Motor neuron (in vitro differentiated cells): ENCODE measurements at regions of chr5 and their contacts with region 1.

Region 1: DNA sequence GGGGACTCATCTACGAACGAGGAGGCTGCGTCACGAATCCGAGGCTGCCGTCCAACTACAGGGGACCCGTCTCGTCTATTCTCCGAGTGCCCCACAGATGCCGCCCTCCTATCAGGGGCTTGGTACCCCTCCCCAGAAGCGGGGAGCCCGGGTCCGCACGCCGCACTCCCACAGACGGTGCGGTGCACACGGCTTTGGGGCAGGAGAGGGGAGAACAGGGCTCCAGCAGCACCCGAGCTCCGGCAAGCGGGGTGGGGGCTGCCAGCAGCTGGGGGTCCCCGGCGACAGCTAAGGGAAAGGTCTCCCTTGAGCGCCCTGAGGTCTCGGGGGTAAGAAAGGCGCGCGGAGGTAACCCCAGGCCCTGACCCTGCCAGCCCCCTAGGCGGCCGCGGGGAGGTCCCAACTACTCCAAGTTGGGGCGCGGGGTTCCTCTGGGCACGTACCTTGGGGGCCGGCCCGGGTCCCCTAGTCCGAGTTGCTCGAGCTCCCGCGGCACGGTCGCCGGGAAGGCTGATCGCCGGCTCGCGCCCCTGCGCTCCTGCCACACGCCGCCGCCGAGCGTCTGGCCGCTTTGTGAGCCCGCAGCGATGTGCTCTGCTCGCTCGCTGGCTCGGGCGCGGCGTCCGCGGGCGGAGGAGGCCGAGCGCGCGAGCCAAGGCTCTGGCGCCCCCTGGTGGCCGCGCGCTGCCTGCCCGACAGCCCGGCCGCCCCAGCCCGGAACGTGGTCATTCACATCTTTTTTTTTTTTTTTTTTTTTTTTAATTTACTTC is at the start of gene SPOCK1:
- ATAC-seq: peak; percentile 85 to 97 (median 95)
- H3K4me3 ChIP-seq: peak within 1 kb of the TSS; percentile 44 to 71 (median 50)
- H3K27ac ChIP-seq: no peak within 1 kb of the TSS
- H3K4me1 ChIP-seq: peaks cover 0 to 2% of the 10 kb centered on the region in 2 donors
- total RNA-seq, gene SPOCK1: 9.4 to 154 (median 25.1) TPM

Region 2: GRCh38 chr5:136802383-136802782 is 696.5 kb before region 1 on chr5:
- in situ Hi-C with region 1: loop called in 4 of 9 experiments (anchors 10 to 25 kb)
- ATAC-seq: peak in 3 of 8 experiments; percentile 28 to 35 (median 32)
- H3K4me3 ChIP-seq: no peak overlapping the region
- H3K27ac ChIP-seq: no peak overlapping the region
- H3K4me1 ChIP-seq: no peaks in the 10 kb centered on the region

Region 3: DNA sequence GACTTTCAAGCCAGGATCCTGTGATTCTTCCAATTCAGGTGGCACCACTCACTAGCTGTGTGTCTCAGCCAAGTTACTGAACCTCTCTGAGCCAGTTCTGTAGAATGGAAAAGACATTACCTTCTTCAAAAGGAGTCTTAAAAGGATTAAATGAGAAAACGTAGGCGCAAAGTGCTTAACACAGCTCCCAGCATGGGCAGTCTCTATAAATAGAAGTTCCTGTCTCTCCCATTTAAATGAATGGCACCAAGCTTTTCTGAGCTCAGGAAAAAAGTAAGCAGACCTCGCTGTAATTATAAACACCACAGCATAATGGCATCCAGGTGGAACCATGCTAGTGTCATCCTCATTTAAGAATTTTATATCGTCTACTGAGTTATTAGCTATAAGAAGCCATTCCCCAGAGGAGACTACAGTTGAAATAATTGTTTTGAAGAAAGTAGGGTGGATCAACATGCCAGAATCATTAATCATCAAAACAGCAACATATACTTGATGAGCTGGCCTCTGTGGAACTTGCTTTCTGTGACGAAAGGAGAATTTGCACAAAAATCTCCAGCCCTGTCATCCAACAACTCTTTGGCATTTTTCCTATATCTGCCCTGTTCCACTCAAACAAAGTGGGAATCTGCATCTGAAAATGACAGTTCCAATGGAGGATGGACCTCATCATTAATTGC is 188.7 kb before region 1 on chr5:
- in situ Hi-C with region 1: loop called in 1 of 9 experiments (anchors 10 kb)
- ATAC-seq: peak; percentile 11 to 91 (median 52)
- H3K4me3 ChIP-seq: no peak overlapping the region
- H3K27ac ChIP-seq: no peak overlapping the region
- H3K4me1 ChIP-seq: peaks cover 6 to 19% of the 10 kb centered on the region in 2 donors

Region 4: DNA sequence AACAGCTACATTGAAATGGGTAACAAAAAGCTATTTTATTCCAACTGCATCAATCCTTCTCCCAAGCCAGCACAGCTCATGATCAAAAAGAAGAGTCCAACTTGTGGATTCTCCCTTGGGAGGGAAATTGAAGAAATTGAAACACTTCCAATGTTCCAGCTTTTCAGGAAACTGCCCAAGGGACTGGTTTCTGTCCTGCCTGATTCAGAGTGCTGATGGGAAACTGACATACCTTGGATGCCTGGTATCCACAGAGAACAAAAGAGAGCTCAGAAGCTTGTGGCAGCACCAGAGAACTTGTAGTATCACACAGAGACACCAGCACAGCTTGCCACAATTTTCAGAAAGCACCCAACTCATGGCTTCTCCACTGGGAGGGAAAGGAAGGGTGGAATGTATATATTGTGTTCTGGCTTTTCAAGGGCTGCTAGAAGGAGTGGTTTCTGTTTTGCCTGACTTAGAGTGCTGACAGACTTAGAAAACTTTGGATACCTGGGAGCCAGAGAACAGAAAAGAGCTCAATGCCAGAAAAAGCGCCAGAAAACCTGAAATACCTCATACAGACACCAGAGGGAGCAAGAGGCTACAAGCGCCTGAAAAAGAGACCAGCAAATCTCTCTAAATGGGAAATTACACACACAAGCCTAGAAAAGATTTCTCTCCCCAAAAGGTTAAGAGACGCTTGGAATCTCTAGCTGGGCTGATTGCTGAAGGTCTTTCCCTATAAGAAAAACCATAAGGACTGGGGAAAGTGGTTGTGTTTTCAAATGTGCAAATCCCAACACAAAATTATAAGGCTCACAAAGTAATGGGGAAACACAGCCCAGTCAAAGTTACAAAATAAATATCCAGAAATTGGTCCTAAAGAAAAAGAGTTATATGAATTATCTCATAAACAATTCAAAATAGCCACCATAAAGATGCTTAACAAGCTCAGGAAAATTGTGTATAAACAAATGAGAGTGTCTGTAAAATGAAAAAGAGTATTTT is 178.6 kb before region 1 on chr5:
- in situ Hi-C with region 1: loop called in 3 of 9 experiments (anchors 10 to 25 kb)
- ATAC-seq: peak in 3 of 8 experiments; percentile 32 to 59 (median 48)
- H3K4me3 ChIP-seq: no peak overlapping the region
- H3K27ac ChIP-seq: no peak overlapping the region
- H3K4me1 ChIP-seq: peaks cover 0 to 13% of the 10 kb centered on the region in 2 donors

Region 5: DNA sequence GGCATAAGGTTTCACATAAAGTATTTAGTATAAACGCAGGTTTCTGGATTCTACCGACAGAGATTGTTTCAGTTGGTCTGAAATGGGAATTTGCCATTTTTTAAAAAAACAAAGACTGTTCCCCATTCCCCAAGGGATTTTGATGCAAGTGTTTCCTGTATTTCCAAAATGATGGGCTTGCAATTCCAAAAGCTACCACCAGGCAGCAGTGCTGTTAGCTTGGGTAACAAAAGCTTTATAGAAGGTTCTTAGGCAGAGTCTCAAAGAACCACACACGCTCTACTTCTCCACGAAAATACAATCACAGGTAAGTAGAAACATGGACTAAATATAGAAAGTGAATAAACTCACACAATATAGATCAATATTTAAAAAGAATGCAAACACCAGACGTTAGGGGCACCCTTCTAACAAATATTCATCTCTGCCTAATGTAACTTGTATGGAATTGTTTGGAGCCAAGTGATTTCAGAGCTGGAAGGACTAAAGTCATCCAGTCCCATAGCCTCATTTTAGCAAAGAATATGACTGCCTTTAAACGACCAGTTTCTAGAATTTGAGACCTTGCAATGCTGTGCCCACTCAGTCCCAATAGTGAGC is 154.1 kb before region 1 on chr5:
- in situ Hi-C with region 1: loop called in 4 of 9 experiments (anchors 10 to 25 kb)
- ATAC-seq: peak in 2 of 8 experiments; percentile 14 to 28
- H3K4me3 ChIP-seq: no peak overlapping the region
- H3K27ac ChIP-seq: no peak overlapping the region
- H3K4me1 ChIP-seq: peaks cover 9 to 15% of the 10 kb centered on the region in 2 donors